CD4-positive, alpha-beta T cell (primary cell): ENCODE measurements at regions of chr20 and their contacts with region 1.

Region 1: DNA sequence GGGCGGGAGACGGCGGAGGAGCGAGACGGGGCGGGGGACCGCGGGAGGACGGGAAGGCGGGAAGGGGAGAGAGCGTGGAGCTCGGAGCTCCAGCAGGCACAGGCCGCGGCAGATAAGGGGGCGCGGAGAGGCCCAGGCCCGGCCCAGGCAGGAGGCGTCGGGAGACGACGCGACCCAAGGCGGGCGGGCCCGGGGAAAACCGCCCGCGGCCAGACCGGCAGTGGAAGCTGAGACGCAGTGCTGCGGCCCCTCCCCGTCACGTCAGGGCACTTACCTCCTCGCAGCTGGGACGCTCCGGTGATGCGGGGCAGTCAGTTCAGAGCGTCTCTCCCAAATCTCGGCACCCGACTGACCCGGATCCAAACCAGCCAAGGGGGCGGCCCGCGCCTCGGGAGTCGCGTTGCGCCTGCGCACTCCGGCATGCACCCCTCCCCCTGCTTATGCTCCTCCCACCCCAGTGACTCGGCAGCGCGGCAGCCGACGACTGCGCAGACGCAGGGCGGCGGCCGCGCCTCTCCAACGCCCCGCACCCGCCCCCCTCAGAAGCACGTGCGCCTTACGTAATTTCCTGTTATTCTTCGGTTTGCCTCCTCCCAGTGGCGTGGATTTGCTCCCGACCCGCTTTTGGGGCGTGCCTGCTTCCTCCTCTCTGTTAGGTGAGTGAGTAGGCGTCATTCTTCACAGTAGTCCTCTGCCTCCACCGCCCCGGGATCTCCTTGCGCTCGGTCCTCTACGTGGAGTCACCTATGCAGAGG is at the start of gene OSER1:
- DNase-seq: peak; percentile 96 to 100 (median 98)
- ATAC-seq: peak; percentile 83
- H3K4me3 ChIP-seq: peak within 1 kb of the TSS; percentile 78
- H3K4me3 Mint-ChIP-seq: peak within 1 kb of the TSS; percentile 92
- H3K27ac ChIP-seq: peak within 1 kb of the TSS; percentile 95 to 98
- H3K27ac Mint-ChIP-seq: peak within 1 kb of the TSS; percentile 99
- H3K4me1 ChIP-seq: peaks cover 29% of the 10 kb centered on the region
- H3K4me1 Mint-ChIP-seq: peaks cover 67% of the 10 kb centered on the region
- H3K27me3 ChIP-seq: no peaks in the 10 kb centered on the region
- H3K27me3 Mint-ChIP-seq: no peaks in the 10 kb centered on the region
- CTCF ChIP-seq: no peak
- total RNA-seq, gene OSER1: 172 TPM

Region 2: GRCh38 chr20:43590392-43591323 is 619.9 kb before region 1 on chr20 and contains the start of gene IFT52:
- CTCF ChIA-PET with region 1: no interaction called
- POLR2A ChIA-PET with region 1: no interaction called
- intact Hi-C with region 1: loop called in 1 of 2 experiments (anchors 10 kb)
- DNase-seq: peak; percentile 77 to 96 (median 86)
- ATAC-seq: peak; percentile 95
- H3K4me3 ChIP-seq: peak within 1 kb of the TSS; percentile 79
- H3K4me3 Mint-ChIP-seq: peak within 1 kb of the TSS; percentile 86
- H3K27ac ChIP-seq: peak within 1 kb of the TSS; percentile 69 to 95
- H3K27ac Mint-ChIP-seq: peak within 1 kb of the TSS; percentile 91
- H3K4me1 ChIP-seq: peaks cover 15% of the 10 kb centered on the region
- H3K4me1 Mint-ChIP-seq: peaks cover 18% of the 10 kb centered on the region
- H3K27me3 ChIP-seq: no peaks in the 10 kb centered on the region
- H3K27me3 Mint-ChIP-seq: peaks cover 6% of the 10 kb centered on the region
- CTCF ChIP-seq: no peak
- total RNA-seq, gene IFT52: 13.7 to 15.5 TPM

Region 3: GRCh38 chr20:44475694-44476560 is 265.3 kb after region 1 on chr20 and contains the start of gene TTPAL:
- CTCF ChIA-PET with region 1: no interaction called
- POLR2A ChIA-PET with region 1: interaction called, 8 read pairs
- intact Hi-C with region 1: loop called in 1 of 2 experiments (anchors 5 kb)
- DNase-seq: peak; percentile 75 to 95 (median 86)
- ATAC-seq: peak; percentile 95
- H3K4me3 ChIP-seq: peak within 1 kb of the TSS; percentile 90
- H3K4me3 Mint-ChIP-seq: peak within 1 kb of the TSS; percentile 95
- H3K27ac ChIP-seq: peak within 1 kb of the TSS; percentile 89 to 98
- H3K27ac Mint-ChIP-seq: peak within 1 kb of the TSS; percentile 96
- H3K4me1 ChIP-seq: peaks cover 18% of the 10 kb centered on the region
- H3K4me1 Mint-ChIP-seq: peaks cover 26% of the 10 kb centered on the region
- H3K27me3 ChIP-seq: no peaks in the 10 kb centered on the region
- H3K27me3 Mint-ChIP-seq: no peaks in the 10 kb centered on the region
- CTCF ChIP-seq: no peak
- total RNA-seq, gene TTPAL: 9.0 to 9.9 TPM

Region 4: DNA sequence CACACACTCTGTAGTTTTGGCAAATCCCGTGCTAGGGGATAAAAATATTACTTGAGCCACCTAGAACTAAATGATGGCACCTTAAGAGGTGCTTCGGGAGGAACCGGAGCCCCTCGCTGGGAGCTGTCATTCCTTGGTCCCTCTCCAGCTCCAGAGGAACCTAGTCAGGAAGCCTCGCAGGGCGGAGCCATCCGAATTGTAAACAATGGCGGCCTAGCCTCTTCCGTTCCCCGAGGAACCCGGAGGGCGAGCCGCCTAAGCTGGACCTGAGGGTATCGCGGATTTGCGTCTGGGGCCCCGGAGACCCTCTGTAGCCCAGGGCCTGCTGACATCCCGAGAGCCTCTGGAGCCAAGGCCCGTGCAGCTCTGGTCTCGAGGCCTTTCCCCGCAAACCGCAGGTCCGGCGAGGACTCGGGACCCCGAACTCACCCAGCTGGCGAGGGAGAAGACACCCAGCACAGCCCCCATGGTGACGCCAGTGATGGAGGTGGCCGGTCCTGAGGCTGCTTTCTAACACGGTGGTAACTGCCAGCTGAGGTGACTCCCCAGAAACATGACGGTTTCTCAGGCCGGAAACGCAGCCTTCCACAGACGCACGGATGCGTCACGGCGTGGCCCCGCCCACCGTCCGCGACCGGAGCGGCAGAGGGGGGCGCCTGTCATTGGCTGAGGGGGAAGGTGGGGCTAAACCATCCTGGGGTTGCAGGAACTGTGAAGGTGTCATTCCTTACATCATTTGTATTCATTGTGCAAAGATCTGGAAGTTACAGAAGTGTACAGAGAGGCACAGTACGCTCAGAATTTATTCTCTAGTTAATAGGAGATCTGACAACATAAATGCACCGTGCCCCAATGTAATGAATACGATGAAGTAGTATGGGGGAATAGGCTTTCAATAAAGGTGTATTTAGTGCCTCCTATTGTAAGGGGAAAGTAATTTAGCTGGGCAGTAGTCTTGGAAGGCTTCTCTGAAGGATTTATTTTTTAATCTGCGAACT is 311.2 kb after region 1 on chr20 and contains the start of gene SERINC3:
- CTCF ChIA-PET with region 1: interaction called, 3 read pairs
- POLR2A ChIA-PET with region 1: interaction called, 7 read pairs
- intact Hi-C with region 1: loop called (anchors 2 to 10 kb)
- DNase-seq: peak; percentile 90 to 99 (median 97)
- ATAC-seq: peak; percentile 93
- H3K4me3 ChIP-seq: peak within 1 kb of the TSS; percentile 98
- H3K4me3 Mint-ChIP-seq: peak within 1 kb of the TSS; percentile 89
- H3K27ac ChIP-seq: peak within 1 kb of the TSS; percentile 95 to 99
- H3K27ac Mint-ChIP-seq: peak within 1 kb of the TSS; percentile 93
- H3K4me1 ChIP-seq: peaks cover 44% of the 10 kb centered on the region
- H3K4me1 Mint-ChIP-seq: peaks cover 58% of the 10 kb centered on the region
- H3K27me3 ChIP-seq: no peaks in the 10 kb centered on the region
- H3K27me3 Mint-ChIP-seq: no peaks in the 10 kb centered on the region
- CTCF ChIP-seq: peak; percentile 46
- total RNA-seq, gene SERINC3: 39.5 to 40.2 TPM

Region 5: DNA sequence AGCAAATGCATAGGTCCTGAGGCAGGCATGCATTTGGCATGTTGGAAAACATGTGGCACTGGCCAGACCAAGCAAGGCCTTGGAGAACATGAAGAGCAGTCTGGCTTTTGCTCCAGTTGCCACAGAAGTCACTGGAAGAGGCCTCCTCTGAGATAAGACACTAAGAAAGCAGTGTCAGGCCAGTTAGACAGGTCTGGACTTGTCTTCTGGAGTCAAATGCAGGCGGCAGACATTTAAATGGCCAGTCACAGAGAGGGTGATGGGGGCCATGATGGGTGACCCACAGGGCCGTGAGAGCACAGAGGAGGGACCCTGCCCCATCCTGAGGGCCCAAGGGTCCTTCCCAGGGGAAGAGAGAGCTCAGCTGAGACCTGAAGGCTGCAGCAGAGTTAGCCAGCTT is 467.6 kb after region 1 on chr20:
- CTCF ChIA-PET with region 1: interaction called, 4 read pairs
- POLR2A ChIA-PET with region 1: no interaction called
- intact Hi-C with region 1: loop called in 1 of 2 experiments (anchors 5 kb)
- DNase-seq: no peak
- ATAC-seq: no peak
- H3K4me3 ChIP-seq: no peak overlapping the region
- H3K4me3 Mint-ChIP-seq: no peak overlapping the region
- H3K27ac ChIP-seq: no peak overlapping the region
- H3K27ac Mint-ChIP-seq: no peak overlapping the region
- H3K4me1 ChIP-seq: no peaks in the 10 kb centered on the region
- H3K4me1 Mint-ChIP-seq: no peaks in the 10 kb centered on the region
- H3K27me3 ChIP-seq: no peaks in the 10 kb centered on the region
- H3K27me3 Mint-ChIP-seq: no peaks in the 10 kb centered on the region
- CTCF ChIP-seq: no peak